Activated CD4-positive, alpha-beta T cell treated with anti-CD3 and anti-CD28 coated beads for 36 hours (primary cell): ENCODE measurements at regions of chr7 and their contacts with region 1.

Region 1: DNA sequence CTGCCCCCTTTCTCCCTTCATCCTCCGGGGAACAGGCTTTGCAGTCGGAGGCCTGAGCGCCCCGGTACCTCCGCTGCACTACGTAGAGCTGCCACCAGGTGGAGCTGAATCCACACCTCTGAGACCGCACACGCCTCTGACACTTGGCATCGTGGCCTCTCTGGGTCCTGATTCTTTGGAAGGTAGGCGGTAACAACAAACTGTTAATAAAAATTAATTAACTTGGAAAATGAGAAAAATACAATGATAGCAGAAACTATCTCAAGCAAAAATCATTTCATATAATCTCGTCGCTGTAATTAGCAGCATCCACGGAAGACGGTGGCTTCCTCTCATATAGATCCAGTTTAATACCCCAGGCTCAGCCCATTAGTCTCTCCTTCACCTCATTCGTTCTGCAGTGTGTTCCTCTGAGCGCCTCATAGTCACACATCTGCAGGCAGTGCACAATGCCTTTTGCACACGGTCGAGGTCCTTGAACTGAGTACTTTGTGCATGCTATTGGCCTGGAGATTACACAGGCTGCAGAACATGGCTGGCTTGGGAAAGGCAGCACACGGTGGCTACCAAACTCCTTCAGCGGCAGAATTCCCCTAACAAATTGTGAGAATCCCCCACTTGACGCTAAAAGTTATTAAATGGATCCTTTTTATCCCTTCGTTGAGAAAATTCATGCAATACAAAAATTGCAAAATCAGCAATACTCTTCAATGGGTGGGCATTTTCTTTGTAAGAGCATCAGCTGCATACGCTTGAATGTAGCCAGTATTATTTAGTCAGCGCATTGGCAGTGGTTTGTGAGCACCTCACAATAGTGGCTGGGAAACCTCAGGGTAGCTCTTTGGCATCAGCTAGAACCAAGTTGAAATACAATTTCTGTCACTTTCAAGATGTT is 18.7 kb downstream of the OR9A2 start:
- DNase-seq: peak; percentile 89
- ATAC-seq: peak; percentile 91
- H3K4me3 Mint-ChIP-seq: no peak overlapping the region
- H3K27ac Mint-ChIP-seq: no peak overlapping the region
- H3K4me1 Mint-ChIP-seq: peaks cover 3% of the 10 kb centered on the region
- H3K27me3 Mint-ChIP-seq: peaks cover 4% of the 10 kb centered on the region

Region 2: DNA sequence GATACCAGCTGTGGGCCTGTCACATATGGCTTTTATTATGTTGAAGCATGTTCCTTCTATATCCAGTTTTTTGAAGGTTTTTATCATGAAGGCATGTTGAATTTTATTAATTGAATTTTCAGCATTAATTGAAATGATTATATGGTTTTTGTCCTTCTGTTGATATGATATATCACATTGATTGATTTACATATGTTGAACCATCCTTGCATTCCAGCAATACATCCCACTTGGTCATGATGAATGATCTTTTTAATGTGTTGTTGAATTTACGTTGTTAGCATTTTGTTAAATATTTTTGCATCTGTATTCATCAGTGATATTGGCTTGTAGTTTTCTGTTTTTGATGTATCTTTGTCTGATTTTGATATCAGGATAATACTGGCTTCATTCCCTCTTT is 1188.2 kb before region 1 on chr7:
- CTCF ChIA-PET with region 1: no interaction called
- POLR2A ChIA-PET with region 1: no interaction called
- intact Hi-C with region 1: no loop called
- DNase-seq: no peak
- ATAC-seq: no peak
- H3K4me3 Mint-ChIP-seq: no peak overlapping the region
- H3K27ac Mint-ChIP-seq: no peak overlapping the region
- H3K4me1 Mint-ChIP-seq: no peaks in the 10 kb centered on the region
- H3K27me3 Mint-ChIP-seq: no peaks in the 10 kb centered on the region

Region 3: GRCh38 chr7:142391191-142391992 is 616.9 kb before region 1 on chr7:
- CTCF ChIA-PET with region 1: interaction called, 3 read pairs
- POLR2A ChIA-PET with region 1: no interaction called
- intact Hi-C with region 1: loop called in 1 of 2 experiments (anchors 5 kb)
- DNase-seq: peak; percentile 77
- ATAC-seq: peak; percentile 87
- H3K4me3 Mint-ChIP-seq: peak overlapping the region; percentile 53
- H3K27ac Mint-ChIP-seq: no peak overlapping the region
- H3K4me1 Mint-ChIP-seq: no peaks in the 10 kb centered on the region
- H3K27me3 Mint-ChIP-seq: no peaks in the 10 kb centered on the region

Region 4: GRCh38 chr7:142632291-142633134 is 375.7 kb before region 1 on chr7:
- CTCF ChIA-PET with region 1: interaction called, 8 read pairs
- POLR2A ChIA-PET with region 1: no interaction called
- intact Hi-C with region 1: loop called (anchors 2 kb)
- DNase-seq: peak; percentile 65
- ATAC-seq: peak; percentile 59
- H3K4me3 Mint-ChIP-seq: peak overlapping the region; percentile 12
- H3K27ac Mint-ChIP-seq: peak overlapping the region; percentile 42
- H3K4me1 Mint-ChIP-seq: peaks cover 10% of the 10 kb centered on the region
- H3K27me3 Mint-ChIP-seq: peaks cover 3% of the 10 kb centered on the region

Region 5: GRCh38 chr7:142880876-142881505 is 127.3 kb before region 1 on chr7:
- CTCF ChIA-PET with region 1: interaction called, 31 read pairs
- POLR2A ChIA-PET with region 1: no interaction called
- intact Hi-C with region 1: loop called (anchors 1 kb)
- DNase-seq: peak; percentile 67
- ATAC-seq: peak; percentile 88
- H3K4me3 Mint-ChIP-seq: no peak overlapping the region
- H3K27ac Mint-ChIP-seq: no peak overlapping the region
- H3K4me1 Mint-ChIP-seq: no peaks in the 10 kb centered on the region
- H3K27me3 Mint-ChIP-seq: peaks cover 4% of the 10 kb centered on the region

Region 6: DNA sequence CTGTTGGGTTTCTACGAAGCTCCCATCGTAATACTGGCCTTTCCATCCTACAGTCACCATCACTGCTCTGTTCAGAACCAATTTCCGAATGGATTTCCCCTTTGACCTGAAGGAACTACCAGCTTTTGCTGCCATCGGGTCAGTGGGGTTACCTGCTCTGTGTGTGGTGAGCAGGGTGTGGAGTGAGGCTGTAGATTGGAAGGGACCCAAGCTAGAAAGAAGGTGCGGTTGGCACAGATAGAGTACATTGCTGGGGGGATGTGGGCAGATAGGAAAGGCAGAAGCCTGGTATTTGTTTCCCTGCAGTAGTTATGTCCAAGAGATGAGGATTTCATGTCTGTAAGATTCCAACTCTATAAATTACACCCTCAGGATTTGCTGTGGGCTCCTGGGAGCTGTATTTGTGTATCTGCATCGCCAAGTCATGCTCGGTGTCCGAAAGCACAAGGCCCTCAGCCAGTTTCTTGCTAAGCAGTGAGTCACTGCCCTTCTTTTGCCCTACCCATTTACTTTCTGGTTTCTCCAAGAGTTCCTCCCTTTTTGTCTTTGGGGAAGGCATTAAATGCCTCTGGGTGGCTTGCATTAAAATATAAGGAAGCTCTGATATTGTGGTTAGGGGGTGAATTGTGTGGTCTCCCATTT is 323.0 kb after region 1 on chr7:
- CTCF ChIA-PET with region 1: no interaction called
- POLR2A ChIA-PET with region 1: no interaction called
- intact Hi-C with region 1: loop called in 1 of 2 experiments (anchors 10 kb)
- DNase-seq: no peak
- ATAC-seq: no peak
- H3K4me3 Mint-ChIP-seq: no peak overlapping the region
- H3K27ac Mint-ChIP-seq: no peak overlapping the region
- H3K4me1 Mint-ChIP-seq: no peaks in the 10 kb centered on the region
- H3K27me3 Mint-ChIP-seq: peaks cover 4% of the 10 kb centered on the region